ENCODE measurements at regions of chr16 and their contacts with region 1.

Region 1: DNA sequence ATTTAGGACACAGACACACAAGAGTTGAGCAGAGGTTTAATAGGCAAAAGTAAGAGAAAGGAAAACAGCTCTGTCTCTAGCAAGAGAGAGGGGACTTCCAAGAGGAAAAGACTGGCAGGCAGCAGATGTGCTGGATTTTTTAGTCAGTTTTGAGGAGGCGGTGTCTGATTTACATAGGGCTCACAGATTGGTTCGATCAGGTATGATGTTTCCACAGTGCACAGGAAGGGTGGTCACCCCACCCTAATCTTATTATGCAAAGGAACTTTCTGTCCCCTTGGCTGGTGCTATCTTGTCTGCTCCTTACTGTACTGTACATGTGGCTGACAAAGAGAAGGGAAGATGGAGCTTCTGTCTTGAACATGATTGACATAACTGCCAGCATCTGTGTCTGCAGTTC is 25.3 kb downstream of the BFAR start:
- DNase-seq: no peak
- H3K4me3 ChIP-seq: no peak overlapping the region
- CTCF ChIP-seq: no peak
- POLR2A ChIP-seq: no peak

Region 2: DNA sequence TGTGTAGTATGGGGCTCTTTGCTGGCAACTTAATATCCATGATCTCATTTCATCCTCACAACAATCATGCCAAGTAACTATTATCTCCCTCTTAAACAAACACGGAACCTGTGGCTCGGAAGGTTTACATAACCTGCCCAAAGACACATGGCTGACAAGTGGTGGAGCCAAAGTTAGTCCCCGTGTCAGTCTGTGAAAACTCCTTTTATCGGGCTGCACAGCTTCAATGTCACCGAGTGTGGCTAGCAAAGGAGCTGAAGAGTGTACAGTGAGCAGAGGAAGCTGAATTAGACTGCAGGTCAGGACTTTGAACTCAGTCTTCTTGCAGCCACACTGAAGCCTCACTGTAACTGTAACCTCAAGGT is 108.3 kb before region 1 on chr16:
- intact Hi-C with region 1: no loop called
- DNase-seq: no peak
- H3K4me3 ChIP-seq: no peak overlapping the region
- CTCF ChIP-seq: no peak
- POLR2A ChIP-seq: no peak

Region 3: GRCh38 chr16:14600164-14600563 is 57.9 kb before region 1 on chr16:
- intact Hi-C with region 1: loop called (anchors 2 kb)
- DNase-seq: no peak
- H3K4me3 ChIP-seq: no peak overlapping the region
- CTCF ChIP-seq: no peak
- POLR2A ChIP-seq: no peak

Measured in lower leg skin (tissue), 4 donors.